Natural killer cell (primary cell): ENCODE measurements at regions of chr9 and their contacts with region 1.

Region 1: GRCh38 chr9:75866273-75866871 is 24.1 kb upstream of the PCSK5 start:
- DNase-seq: peak in 1 of 2 donors; percentile 69
- ATAC-seq: peak in 1 of 3 donors; percentile 60
- H3K4me3 ChIP-seq: no peak overlapping the region
- H3K4me3 Mint-ChIP-seq: no peak overlapping the region
- H3K27ac ChIP-seq: no peak overlapping the region
- H3K27ac Mint-ChIP-seq: no peak overlapping the region
- H3K4me1 ChIP-seq: no peaks in the 10 kb centered on the region
- H3K4me1 Mint-ChIP-seq: no peaks in the 10 kb centered on the region
- H3K27me3 ChIP-seq: no peaks in the 10 kb centered on the region
- H3K27me3 Mint-ChIP-seq: peaks cover 20 to 46% of the 10 kb centered on the region in 2 donors
- CTCF ChIP-seq: peak; percentile 73

Region 2: DNA sequence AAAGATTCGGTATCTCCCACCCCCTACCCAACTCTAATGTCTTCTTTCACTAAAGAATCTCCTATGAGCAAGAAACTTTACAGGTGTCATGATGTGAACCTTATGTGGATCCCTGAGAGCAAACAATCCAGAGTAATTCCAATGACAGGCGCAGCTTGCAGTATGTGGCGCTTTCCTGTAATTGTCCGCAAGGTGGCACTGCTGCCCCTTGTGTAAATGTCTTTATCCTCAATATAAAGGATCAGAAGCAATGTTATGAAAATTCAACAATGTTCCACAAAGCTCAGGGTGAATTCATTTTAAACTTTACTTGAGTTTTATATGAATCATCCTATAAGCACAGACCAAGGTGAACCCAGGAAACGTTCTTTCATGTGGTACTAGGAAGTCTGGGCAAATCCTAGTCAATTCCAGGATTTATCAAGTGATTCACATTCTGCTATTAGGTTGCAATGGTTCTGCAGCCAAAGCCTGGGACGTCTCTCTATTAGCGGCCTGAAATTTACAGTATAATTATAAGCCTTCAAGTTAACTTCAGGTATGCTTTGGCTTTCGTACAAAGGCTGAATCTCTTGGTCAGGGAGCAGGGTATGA is 1092.4 kb before region 1 on chr9:
- intact Hi-C with region 1: loop called (anchors 5 kb)
- DNase-seq: peak; percentile 61 to 84
- ATAC-seq: peak; percentile 75 to 87 (median 83)
- H3K4me3 ChIP-seq: no peak overlapping the region
- H3K4me3 Mint-ChIP-seq: no peak overlapping the region
- H3K27ac ChIP-seq: no peak overlapping the region
- H3K27ac Mint-ChIP-seq: no peak overlapping the region
- H3K4me1 ChIP-seq: no peaks in the 10 kb centered on the region
- H3K4me1 Mint-ChIP-seq: no peaks in the 10 kb centered on the region
- H3K27me3 ChIP-seq: peaks cover 3% of the 10 kb centered on the region
- H3K27me3 Mint-ChIP-seq: peaks cover 13 to 18% of the 10 kb centered on the region in 2 donors
- CTCF ChIP-seq: peak; percentile 98

Region 3: DNA sequence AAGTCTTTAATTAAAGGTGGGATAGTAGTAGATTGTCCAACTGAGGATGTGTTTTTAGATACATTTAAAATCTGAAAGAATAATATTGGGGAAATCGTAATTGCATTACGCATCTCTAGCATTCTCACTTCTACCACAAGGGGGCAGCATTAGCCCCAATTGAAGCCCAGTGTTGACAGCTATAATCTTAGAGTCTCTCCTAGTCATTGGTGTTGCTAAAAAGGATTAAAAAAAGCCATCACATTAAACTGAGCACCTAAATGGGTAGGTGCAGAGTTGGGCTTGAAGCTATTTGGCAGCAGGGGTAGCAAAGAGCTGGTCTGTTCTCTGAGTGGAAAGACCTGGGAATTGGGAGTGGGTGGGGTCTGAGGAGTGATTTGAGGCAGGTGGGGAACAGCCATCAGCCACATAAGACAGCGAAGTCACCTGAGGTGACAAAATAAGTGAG is 600.8 kb before region 1 on chr9:
- intact Hi-C with region 1: loop called (anchors 10 kb)
- DNase-seq: peak in 1 of 2 donors; percentile 72
- ATAC-seq: peak; percentile 68 to 75 (median 71)
- H3K4me3 ChIP-seq: no peak overlapping the region
- H3K4me3 Mint-ChIP-seq: no peak overlapping the region
- H3K27ac ChIP-seq: no peak overlapping the region
- H3K27ac Mint-ChIP-seq: peak overlapping the region in 1 of 2 donors; percentile 36
- H3K4me1 ChIP-seq: no peaks in the 10 kb centered on the region
- H3K4me1 Mint-ChIP-seq: peaks cover 4 to 7% of the 10 kb centered on the region in 2 donors
- H3K27me3 ChIP-seq: no peaks in the 10 kb centered on the region
- H3K27me3 Mint-ChIP-seq: no peaks in the 10 kb centered on the region
- CTCF ChIP-seq: peak; percentile 95

Region 4: GRCh38 chr9:76302947-76303940 is 436.9 kb after region 1 on chr9:
- intact Hi-C with region 1: loop called (anchors 2 kb)
- DNase-seq: peak in 1 of 2 donors; percentile 66
- ATAC-seq: peak; percentile 57 to 82 (median 70)
- H3K4me3 ChIP-seq: no peak overlapping the region
- H3K4me3 Mint-ChIP-seq: no peak overlapping the region
- H3K27ac ChIP-seq: no peak overlapping the region
- H3K27ac Mint-ChIP-seq: no peak overlapping the region
- H3K4me1 ChIP-seq: no peaks in the 10 kb centered on the region
- H3K4me1 Mint-ChIP-seq: no peaks in the 10 kb centered on the region
- H3K27me3 ChIP-seq: no peaks in the 10 kb centered on the region
- H3K27me3 Mint-ChIP-seq: peaks cover under 1 to 3% of the 10 kb centered on the region in 2 donors
- CTCF ChIP-seq: peak; percentile 73